B cell (primary cell): ENCODE measurements at regions of chr2 and their contacts with region 1.

Region 1: DNA sequence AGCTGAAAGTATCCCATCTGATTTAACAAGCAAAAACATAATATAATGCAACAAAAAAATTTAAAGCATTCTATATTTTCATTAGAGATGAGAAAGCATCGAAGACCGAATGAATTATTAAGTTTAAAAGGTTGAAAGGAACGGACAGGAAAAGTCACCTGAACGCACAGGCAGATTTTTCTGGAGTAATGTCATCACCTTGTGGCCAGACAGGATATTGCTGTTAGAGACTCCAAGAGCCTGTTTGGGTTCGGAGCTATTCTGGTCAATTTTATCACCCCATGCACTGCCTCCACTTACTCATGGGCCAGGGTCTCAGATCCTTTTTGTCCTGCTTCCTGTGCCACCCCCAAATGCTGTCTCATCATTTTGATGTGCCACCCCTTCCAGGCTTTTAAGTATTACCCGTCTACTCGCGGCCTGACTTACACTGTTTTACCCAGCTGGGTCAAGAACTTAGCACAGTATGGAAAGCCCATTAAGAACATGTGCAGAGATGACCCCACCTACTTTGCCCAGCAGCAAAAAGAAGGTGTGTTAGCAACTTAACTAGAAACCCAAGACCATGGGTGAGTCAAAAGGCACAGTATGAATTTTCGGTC is 27.3 kb downstream of the GKN2 start:
- DNase-seq: peak; percentile 76
- ATAC-seq: peak; percentile 56
- H3K4me3 ChIP-seq: no peak overlapping the region
- H3K4me3 Mint-ChIP-seq: no peak overlapping the region
- H3K27ac ChIP-seq: no peak overlapping the region
- H3K27ac Mint-ChIP-seq: no peak overlapping the region
- H3K4me1 ChIP-seq: no peaks in the 10 kb centered on the region
- H3K4me1 Mint-ChIP-seq: no peaks in the 10 kb centered on the region
- H3K27me3 ChIP-seq: no peaks in the 10 kb centered on the region
- H3K27me3 Mint-ChIP-seq: peaks cover 4% of the 10 kb centered on the region
- CTCF ChIP-seq: peak; percentile 95

Region 2: DNA sequence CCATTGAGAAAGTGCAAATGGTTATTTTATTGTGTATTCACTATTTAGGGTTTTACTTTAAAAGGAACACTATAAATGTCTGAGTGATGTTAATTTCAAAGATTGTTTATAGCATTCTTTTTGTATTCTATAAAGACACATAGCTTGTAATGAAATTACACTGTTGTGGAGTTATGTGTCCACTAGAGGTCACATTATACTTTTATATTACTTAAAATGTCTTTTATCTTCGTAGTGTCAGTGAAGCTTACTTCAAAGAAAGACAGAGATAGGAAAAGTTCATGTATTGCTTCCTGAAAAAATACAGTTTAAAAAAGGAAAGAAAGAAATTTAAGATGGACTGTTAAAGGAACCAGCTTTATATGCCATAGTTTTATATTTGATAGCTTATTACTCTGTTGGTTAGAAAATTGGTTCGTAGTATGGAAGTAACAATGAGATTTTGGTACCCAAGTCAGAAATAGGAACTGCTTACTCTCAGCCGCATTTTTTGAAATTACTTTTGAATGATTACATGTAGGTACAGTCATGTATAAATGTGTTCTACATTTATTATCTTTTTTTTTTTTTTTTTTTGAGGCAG is 437.5 kb before region 1 on chr2:
- CTCF ChIA-PET with region 1: interaction called, 142 read pairs
- POLR2A ChIA-PET with region 1: no interaction called
- intact Hi-C with region 1: loop called (anchors 1 kb)
- DNase-seq: peak; percentile 50
- ATAC-seq: no peak
- H3K4me3 ChIP-seq: no peak overlapping the region
- H3K4me3 Mint-ChIP-seq: no peak overlapping the region
- H3K27ac ChIP-seq: no peak overlapping the region
- H3K27ac Mint-ChIP-seq: no peak overlapping the region
- H3K4me1 ChIP-seq: peaks cover 0 to 2% of the 10 kb centered on the region in 2 donors
- H3K4me1 Mint-ChIP-seq: peaks cover 4% of the 10 kb centered on the region
- H3K27me3 ChIP-seq: no peaks in the 10 kb centered on the region
- H3K27me3 Mint-ChIP-seq: no peaks in the 10 kb centered on the region
- CTCF ChIP-seq: peak; percentile 76

Region 3: GRCh38 chr2:68689553-68690537 is 235.6 kb before region 1 on chr2:
- CTCF ChIA-PET with region 1: interaction called, 11 read pairs
- POLR2A ChIA-PET with region 1: no interaction called
- intact Hi-C with region 1: no loop called
- DNase-seq: peak; percentile 80
- ATAC-seq: peak; percentile 81
- H3K4me3 ChIP-seq: peak overlapping the region in 4 of 5 experiments; percentile 8 to 50 (median 22)
- H3K4me3 Mint-ChIP-seq: peak overlapping the region; percentile 65
- H3K27ac ChIP-seq: peak overlapping the region; percentile 39 to 62
- H3K27ac Mint-ChIP-seq: peak overlapping the region; percentile 84
- H3K4me1 ChIP-seq: peaks cover 35 to 36% of the 10 kb centered on the region in 2 donors
- H3K4me1 Mint-ChIP-seq: peaks cover 40% of the 10 kb centered on the region
- H3K27me3 ChIP-seq: no peaks in the 10 kb centered on the region
- H3K27me3 Mint-ChIP-seq: no peaks in the 10 kb centered on the region
- CTCF ChIP-seq: no peak

Region 4: DNA sequence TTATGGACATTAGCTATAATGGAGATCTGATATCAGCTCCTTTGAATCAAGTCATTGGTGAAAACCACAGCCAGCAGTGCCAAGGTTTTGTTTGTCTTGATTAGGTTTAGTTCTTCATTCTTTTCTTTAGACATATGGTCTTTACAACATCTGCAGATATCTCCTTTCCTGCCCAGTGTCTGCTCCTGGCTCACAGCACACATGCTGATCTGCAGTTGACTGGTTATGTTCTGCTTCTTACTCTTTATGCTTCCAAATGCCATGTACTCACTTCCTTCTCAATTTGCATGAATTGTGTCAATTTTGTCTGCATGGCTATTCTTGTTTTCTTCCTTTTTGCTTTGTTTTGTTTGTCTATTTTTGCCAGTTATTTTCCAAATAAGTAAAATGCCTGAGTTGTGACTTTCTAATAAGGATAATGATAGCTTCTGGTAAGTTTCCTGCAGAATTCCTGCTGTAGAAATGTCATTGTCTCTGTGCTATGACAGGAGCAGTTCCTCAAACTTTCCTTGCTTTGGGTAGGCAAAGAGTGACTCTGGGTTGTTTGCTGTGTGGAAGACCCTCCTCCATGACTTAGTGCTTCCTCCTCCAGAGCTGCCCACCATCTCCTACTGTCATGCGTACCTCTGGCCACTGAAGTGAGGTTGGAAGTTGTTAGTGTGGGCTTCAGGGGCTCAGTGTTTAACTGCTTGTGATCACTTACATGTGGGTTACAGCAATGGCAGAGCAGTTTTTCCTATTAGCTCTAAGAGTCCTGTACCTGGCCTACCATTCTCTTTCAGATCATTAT is 182.6 kb before region 1 on chr2:
- CTCF ChIA-PET with region 1: interaction called, 72 read pairs
- POLR2A ChIA-PET with region 1: no interaction called
- intact Hi-C with region 1: no loop called
- DNase-seq: peak; percentile 69
- ATAC-seq: peak; percentile 64
- H3K4me3 ChIP-seq: peak overlapping the region in 3 of 5 experiments; percentile 27 to 53 (median 34)
- H3K4me3 Mint-ChIP-seq: peak overlapping the region; percentile 70
- H3K27ac ChIP-seq: peak overlapping the region; percentile 69 to 72
- H3K27ac Mint-ChIP-seq: peak overlapping the region; percentile 78
- H3K4me1 ChIP-seq: peaks cover 79 to 86% of the 10 kb centered on the region in 2 donors
- H3K4me1 Mint-ChIP-seq: peaks cover 90% of the 10 kb centered on the region
- H3K27me3 ChIP-seq: no peaks in the 10 kb centered on the region
- H3K27me3 Mint-ChIP-seq: no peaks in the 10 kb centered on the region
- CTCF ChIP-seq: no peak

Region 5: DNA sequence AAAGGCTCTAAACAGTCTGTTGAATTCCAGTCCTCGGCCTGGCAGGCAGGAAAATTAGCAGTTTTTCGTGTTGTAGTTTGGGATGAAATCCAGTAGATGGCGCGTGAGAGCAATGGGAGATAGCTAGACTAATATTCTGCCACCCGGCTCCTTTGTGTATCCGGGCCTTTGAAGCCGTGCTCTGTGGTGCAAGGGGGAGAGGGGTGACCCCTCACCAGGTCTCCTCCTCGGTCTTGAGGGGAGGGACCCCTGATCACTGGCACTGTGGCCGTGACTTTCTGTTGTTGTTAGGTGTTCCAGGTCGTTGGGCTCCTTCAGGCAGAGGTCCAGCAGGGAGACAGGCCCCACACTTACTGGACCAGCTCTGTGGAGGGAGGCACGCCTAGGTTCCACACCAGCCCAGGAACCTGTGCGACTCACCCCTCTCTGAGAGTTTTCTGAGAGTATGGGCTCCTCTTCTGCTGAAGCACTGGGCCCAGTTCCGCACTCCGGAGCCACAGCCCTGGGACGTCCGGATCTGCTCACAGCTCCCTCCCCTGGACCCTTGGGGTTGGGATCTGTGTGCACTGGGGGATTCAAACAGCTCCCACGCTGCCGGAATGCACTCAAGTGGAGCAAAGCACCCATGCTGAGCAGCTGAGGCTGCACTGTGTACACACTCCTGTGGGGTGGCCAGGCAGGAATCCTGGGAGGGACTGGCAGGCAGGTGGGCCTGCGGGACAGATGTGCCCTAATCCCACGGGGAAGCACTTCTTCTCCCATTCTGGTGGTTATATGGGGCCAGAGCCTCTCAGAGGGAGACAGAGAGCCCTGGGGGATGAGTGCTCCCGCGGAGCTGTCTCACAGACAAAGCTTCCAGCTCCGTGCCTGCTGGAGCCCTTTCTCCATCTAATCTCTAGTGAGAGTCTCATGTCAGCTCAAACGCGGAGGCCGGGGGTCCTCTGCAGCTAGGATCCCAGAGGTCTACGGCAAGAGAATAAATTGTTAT is 18.5 kb after region 1 on chr2:
- CTCF ChIA-PET with region 1: interaction called, 17 read pairs
- POLR2A ChIA-PET with region 1: no interaction called
- intact Hi-C with region 1: no loop called
- DNase-seq: peak; percentile 70
- ATAC-seq: peak; percentile 73
- H3K4me3 ChIP-seq: no peak overlapping the region
- H3K4me3 Mint-ChIP-seq: no peak overlapping the region
- H3K27ac ChIP-seq: no peak overlapping the region
- H3K27ac Mint-ChIP-seq: no peak overlapping the region
- H3K4me1 ChIP-seq: peaks cover 0 to 5% of the 10 kb centered on the region in 2 donors
- H3K4me1 Mint-ChIP-seq: peaks cover 4% of the 10 kb centered on the region
- H3K27me3 ChIP-seq: peaks cover 0 to 24% (median 12%) of the 10 kb centered on the region in 4 experiments
- H3K27me3 Mint-ChIP-seq: peaks cover 54% of the 10 kb centered on the region
- CTCF ChIP-seq: peak; percentile 91

Region 6: GRCh38 chr2:68980956-68981355 is 55.6 kb after region 1 on chr2:
- CTCF ChIA-PET with region 1: no interaction called
- POLR2A ChIA-PET with region 1: no interaction called
- intact Hi-C with region 1: no loop called
- DNase-seq: no peak
- ATAC-seq: no peak
- H3K4me3 ChIP-seq: no peak overlapping the region
- H3K4me3 Mint-ChIP-seq: no peak overlapping the region
- H3K27ac ChIP-seq: no peak overlapping the region
- H3K27ac Mint-ChIP-seq: no peak overlapping the region
- H3K4me1 ChIP-seq: no peaks in the 10 kb centered on the region
- H3K4me1 Mint-ChIP-seq: no peaks in the 10 kb centered on the region
- H3K27me3 ChIP-seq: peaks cover 0 to 17% (median 1%) of the 10 kb centered on the region in 4 experiments
- H3K27me3 Mint-ChIP-seq: peaks cover 45% of the 10 kb centered on the region
- CTCF ChIP-seq: no peak